HEK293 (cell line): ENCODE measurements at regions of chrX and their contacts with region 1.

Region 1: GRCh38 chrX:30117964-30118363 is 97.4 kb upstream of the MAGEB2 start:
- H3K4me3 ChIP-seq: no peak overlapping the region
- H3K27ac ChIP-seq: no peak overlapping the region
- H3K4me1 ChIP-seq: no peaks in the 10 kb centered on the region
- CTCF ChIP-seq: no peak

Region 2: DNA sequence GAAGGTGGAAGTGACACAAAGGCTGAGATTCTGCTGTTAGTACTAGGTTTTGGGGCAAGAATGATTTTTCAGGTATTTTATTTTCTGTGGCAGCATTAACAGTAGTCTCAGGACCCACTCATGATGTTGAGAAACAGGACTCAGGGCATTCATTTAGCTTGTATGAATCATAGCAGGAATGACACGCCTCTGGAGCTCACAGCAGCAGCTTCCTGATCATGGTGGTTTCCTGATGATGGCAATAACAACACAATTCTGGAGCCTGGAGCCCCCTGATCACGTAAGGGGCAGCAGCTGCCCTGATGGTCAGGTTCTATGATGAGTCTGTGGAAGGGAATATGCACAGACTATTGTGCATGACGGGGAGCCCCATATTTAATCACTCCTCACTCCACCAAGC is 412.6 kb after region 1 on chrX:
- CTCF ChIA-PET with region 1: no interaction called
- POLR2A ChIA-PET with region 1: interaction called, 11 read pairs
- H3K4me3 ChIP-seq: no peak overlapping the region
- H3K27ac ChIP-seq: no peak overlapping the region
- H3K4me1 ChIP-seq: no peaks in the 10 kb centered on the region
- CTCF ChIP-seq: no peak

Region 3: DNA sequence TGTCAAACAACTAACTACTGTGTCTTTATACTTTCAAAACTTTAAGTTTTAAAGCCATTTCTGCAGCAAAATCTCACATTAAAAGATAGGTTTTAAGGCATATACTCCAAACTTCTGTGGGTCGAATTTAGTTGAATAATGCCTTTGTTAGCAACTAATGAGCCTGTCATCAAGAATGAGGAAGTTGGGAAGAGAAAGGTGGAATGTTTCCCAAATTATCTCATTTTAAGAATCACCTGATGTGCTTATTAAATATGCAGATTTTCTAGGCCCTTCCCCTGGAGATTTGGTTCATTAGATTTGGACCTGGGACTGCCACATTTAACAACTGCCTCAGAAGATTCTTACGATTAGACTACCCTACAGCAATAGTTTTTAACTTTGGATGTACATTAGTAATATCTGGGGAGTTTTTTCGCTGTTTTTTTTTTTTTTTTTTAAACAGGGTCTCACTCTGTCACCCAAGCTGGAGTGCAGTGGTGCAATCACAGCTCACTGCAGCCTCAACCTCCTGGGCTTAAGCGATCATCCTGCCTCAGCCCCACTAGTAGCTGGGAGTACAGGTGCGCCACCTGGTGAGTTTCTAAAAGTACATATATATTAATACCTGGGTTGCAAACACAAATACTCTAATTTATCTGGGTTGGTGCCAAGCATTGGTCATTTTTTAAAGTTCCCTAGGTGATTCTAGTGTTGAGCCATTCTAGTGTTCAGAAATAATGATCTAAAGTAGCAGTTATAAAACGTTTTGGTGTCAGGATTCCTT is 475.7 kb after region 1 on chrX:
- CTCF ChIA-PET with region 1: no interaction called
- POLR2A ChIA-PET with region 1: no interaction called
- H3K4me3 ChIP-seq: no peak overlapping the region
- H3K27ac ChIP-seq: no peak overlapping the region
- H3K4me1 ChIP-seq: no peaks in the 10 kb centered on the region
- CTCF ChIP-seq: no peak